ENCODE measurements at regions of chr12 and their contacts with region 1.

Region 1: GRCh38 chr12:123365025-123365917 is 624 bp upstream of the SBNO1 start:
- DNase-seq: peak; percentile 91
- ATAC-seq: peak; percentile 69
- H3K4me3 Mint-ChIP-seq: peak overlapping the region; percentile 90
- H3K27ac Mint-ChIP-seq: peak overlapping the region; percentile 99
- H3K4me1 Mint-ChIP-seq: peaks cover 21% of the 10 kb centered on the region
- H3K27me3 Mint-ChIP-seq: no peaks in the 10 kb centered on the region
- CTCF ChIP-seq: no peak

Region 2: DNA sequence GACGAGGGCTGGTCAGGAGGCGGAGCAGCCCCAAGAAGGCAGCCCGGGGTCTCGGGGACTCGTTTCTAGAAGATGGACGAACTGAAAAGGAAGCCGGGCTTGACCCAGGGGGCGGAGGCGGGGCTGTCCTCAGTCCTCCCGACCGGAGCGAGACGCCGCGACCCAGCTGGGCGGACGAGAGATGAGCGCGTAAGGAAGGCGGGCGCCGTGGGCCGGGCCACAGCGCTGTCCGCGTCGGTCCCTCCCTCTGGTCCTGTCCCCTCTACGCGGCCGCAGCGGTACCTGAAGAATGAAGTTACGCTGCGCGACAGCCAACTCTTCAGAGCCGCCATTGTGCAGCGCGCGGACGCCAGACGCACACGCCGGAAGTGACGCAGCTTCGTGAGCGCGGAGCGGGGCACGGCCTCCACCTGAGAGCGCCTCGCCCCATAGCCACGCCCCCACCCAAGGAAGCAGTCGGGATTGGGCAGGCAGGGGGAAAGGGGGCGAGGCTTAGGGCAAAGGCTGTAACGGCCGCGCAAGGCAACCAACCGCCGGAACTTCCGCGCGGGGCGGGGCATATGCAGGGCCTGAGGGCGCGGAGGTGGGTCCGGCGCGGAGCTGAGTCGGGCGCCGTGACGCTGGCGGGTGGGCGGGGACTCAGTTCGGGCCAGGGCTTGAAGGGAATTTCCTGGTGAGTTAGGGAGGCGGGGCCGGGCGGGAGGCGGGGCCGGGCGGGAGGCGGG is 1139.4 kb before region 1 on chr12 and contains the start of gene DIABLO:
- CTCF ChIA-PET with region 1: no interaction called
- POLR2A ChIA-PET with region 1: no interaction called
- intact Hi-C with region 1: loop called (anchors 2 kb)
- DNase-seq: peak; percentile 99
- ATAC-seq: peak; percentile 93
- H3K4me3 Mint-ChIP-seq: peak within 1 kb of the TSS; percentile 89
- H3K27ac Mint-ChIP-seq: peak within 1 kb of the TSS; percentile 89
- H3K4me1 Mint-ChIP-seq: peaks cover 26% of the 10 kb centered on the region
- H3K27me3 Mint-ChIP-seq: no peaks in the 10 kb centered on the region
- CTCF ChIP-seq: no peak
- total RNA-seq, gene DIABLO: 39.8 and 51.3 TPM in 2 replicates

Region 3: GRCh38 chr12:123271001-123271729 is 94.1 kb before region 1 on chr12:
- CTCF ChIA-PET with region 1: no interaction called
- POLR2A ChIA-PET with region 1: no interaction called
- intact Hi-C with region 1: loop called (anchors 2 kb)
- DNase-seq: peak; percentile 76
- ATAC-seq: peak; percentile 81
- H3K4me3 Mint-ChIP-seq: no peak overlapping the region
- H3K27ac Mint-ChIP-seq: no peak overlapping the region
- H3K4me1 Mint-ChIP-seq: peaks cover 31% of the 10 kb centered on the region
- H3K27me3 Mint-ChIP-seq: no peaks in the 10 kb centered on the region
- CTCF ChIP-seq: no peak

Region 4: GRCh38 chr12:123388177-123388947 is 23.1 kb after region 1 on chr12:
- CTCF ChIA-PET with region 1: interaction called, 11 read pairs
- POLR2A ChIA-PET with region 1: interaction called, 88 read pairs
- intact Hi-C with region 1: loop called (anchors 1 kb)
- DNase-seq: peak; percentile 79
- ATAC-seq: peak; percentile 59
- H3K4me3 Mint-ChIP-seq: peak overlapping the region; percentile 88
- H3K27ac Mint-ChIP-seq: peak overlapping the region; percentile 87
- H3K4me1 Mint-ChIP-seq: peaks cover 36% of the 10 kb centered on the region
- H3K27me3 Mint-ChIP-seq: no peaks in the 10 kb centered on the region
- CTCF ChIP-seq: no peak

Region 5: GRCh38 chr12:123436017-123436964 is 71.0 kb after region 1 on chr12 and contains the start of gene RILPL2:
- CTCF ChIA-PET with region 1: no interaction called
- POLR2A ChIA-PET with region 1: interaction called, 23 read pairs
- intact Hi-C with region 1: loop called (anchors 1 kb)
- DNase-seq: peak; percentile 93
- ATAC-seq: peak; percentile 83
- H3K4me3 Mint-ChIP-seq: peak within 1 kb of the TSS; percentile 98
- H3K27ac Mint-ChIP-seq: peak within 1 kb of the TSS; percentile 97
- H3K4me1 Mint-ChIP-seq: peaks cover 52% of the 10 kb centered on the region
- H3K27me3 Mint-ChIP-seq: no peaks in the 10 kb centered on the region
- CTCF ChIP-seq: no peak
- total RNA-seq, gene RILPL2: 11.2 and 12.2 TPM in 2 replicates

Region 6: GRCh38 chr12:123468562-123469185 is 103.4 kb after region 1 on chr12:
- CTCF ChIA-PET with region 1: interaction called, 3 read pairs
- POLR2A ChIA-PET with region 1: interaction called, 11 read pairs
- intact Hi-C with region 1: loop called (anchors 1 kb)
- DNase-seq: no peak
- ATAC-seq: peak; percentile 95
- H3K4me3 Mint-ChIP-seq: no peak overlapping the region
- H3K27ac Mint-ChIP-seq: peak overlapping the region; percentile 42
- H3K4me1 Mint-ChIP-seq: peaks cover 6% of the 10 kb centered on the region
- H3K27me3 Mint-ChIP-seq: no peaks in the 10 kb centered on the region
- CTCF ChIP-seq: no peak

Region 7: DNA sequence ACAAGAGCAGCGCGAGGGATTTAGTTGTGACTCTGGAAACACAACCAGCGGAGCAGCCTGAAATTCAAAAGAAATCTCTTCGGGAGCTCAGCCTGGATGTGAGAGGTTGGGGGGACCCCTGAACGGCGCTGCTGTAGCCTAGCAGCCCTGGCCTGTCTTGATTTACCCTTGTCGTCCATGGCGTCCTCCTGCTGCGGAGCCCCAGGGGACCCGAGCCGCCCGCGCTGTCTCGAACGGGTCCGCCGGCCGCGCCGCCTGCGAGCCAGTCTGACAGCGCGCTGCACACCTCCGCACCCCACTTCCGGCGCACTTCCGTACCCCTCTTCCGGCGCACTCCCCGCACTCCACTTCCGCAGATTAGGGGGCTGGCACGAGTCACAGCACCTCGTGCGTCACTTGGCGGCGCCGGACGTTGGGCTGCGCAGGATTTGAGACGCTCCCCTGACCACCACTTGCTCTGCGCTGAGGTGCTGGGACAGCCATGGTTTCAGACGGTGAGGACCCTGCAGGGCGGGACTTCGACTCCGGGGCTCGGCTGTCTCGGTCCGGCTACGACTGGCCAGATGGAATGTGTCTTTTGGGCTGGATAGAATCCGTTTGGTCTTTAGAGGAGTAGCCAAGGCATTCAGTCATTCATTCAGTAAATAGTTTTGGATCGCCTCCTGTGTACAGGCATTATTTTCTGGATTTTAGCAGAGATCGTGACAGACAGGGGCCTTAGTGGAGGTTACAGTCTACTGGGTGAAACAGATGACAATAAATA is 268.3 kb after region 1 on chr12 and contains the starts of genes EIF2B1 and GTF2H3:
- CTCF ChIA-PET with region 1: no interaction called
- POLR2A ChIA-PET with region 1: no interaction called
- intact Hi-C with region 1: loop called (anchors 1 kb)
- DNase-seq: peak; percentile 96
- ATAC-seq: peak; percentile 98
- H3K4me3 Mint-ChIP-seq: peak within 1 kb of the TSS; percentile 96
- H3K27ac Mint-ChIP-seq: peak within 1 kb of the TSS; percentile 93
- H3K4me1 Mint-ChIP-seq: peaks cover 24% of the 10 kb centered on the region
- H3K27me3 Mint-ChIP-seq: no peaks in the 10 kb centered on the region
- CTCF ChIP-seq: no peak
- total RNA-seq, gene EIF2B1: 67.3 and 79.7 TPM in 2 replicates
- total RNA-seq, gene GTF2H3: 33.8 and 36.2 TPM in 2 replicates

Region 8: DNA sequence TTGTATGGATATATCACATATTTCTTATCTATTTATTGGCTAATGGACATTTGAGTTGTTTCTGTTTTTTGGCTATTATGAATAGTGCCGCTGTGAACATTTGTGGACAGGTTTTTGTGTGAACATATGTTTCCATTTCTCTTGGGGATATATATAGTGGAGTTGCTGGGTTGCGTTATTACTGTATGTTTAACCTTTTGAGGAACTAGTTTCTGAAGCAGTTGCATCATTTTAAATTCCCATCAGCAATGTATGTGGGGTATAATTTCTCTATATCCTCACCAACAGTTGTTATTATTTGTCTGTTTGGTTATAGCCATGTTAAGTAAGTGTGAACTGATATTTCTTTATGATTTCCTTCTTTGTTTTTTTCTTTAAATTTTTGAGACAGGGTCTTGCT is 316.3 kb after region 1 on chr12:
- CTCF ChIA-PET with region 1: no interaction called
- POLR2A ChIA-PET with region 1: no interaction called
- intact Hi-C with region 1: no loop called
- DNase-seq: no peak
- ATAC-seq: no peak
- H3K4me3 Mint-ChIP-seq: no peak overlapping the region
- H3K27ac Mint-ChIP-seq: peak overlapping the region; percentile 21
- H3K4me1 Mint-ChIP-seq: peaks cover 7% of the 10 kb centered on the region
- H3K27me3 Mint-ChIP-seq: no peaks in the 10 kb centered on the region
- CTCF ChIP-seq: no peak

Region 9: GRCh38 chr12:124147575-124147974 is 782.3 kb after region 1 on chr12:
- CTCF ChIA-PET with region 1: no interaction called
- POLR2A ChIA-PET with region 1: no interaction called
- intact Hi-C with region 1: no loop called
- DNase-seq: no peak
- ATAC-seq: peak; percentile 31
- H3K4me3 Mint-ChIP-seq: no peak overlapping the region
- H3K27ac Mint-ChIP-seq: no peak overlapping the region
- H3K4me1 Mint-ChIP-seq: peaks cover 5% of the 10 kb centered on the region
- H3K27me3 Mint-ChIP-seq: peaks cover 5% of the 10 kb centered on the region
- CTCF ChIP-seq: no peak

Measured in activated B cell treated with CpG ODN at 0.5 μM for 24 hours (primary cell).